Esophagus muscularis mucosa (tissue), 4 donors: ENCODE measurements at regions of chr14 and their contacts with region 1.

Region 1: DNA sequence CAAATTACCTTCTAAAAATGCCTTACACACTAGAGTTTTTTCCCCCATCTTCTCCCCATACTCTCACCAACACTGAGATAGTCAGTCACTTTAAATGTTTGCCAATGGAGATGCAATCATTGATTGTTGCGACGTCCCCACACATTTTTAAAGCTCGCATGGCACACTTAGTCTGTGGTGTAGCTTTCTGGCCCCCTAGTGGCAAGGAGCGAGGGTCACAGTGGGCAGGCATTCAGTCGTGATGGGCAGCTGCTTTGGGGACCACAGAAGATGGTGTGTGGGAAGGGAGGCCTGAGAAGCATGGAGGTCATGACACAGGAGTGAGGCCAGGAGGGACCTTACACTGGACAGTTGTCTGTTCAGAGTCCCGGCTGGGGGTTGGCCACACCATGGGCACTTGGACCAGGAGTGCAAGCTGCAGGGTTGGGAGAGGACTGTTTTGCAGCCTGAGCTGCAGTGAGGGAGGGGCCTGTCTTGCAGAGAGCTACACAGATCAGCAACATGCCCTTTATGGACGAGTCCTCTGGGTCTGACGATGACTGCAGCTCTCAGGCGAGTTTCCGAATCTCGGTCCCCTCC is 28.7 kb downstream of the PIGH start:
- DNase-seq: no peak
- H3K4me3 ChIP-seq: no peak overlapping the region
- H3K27ac ChIP-seq: no peak overlapping the region
- H3K4me1 ChIP-seq: no peaks in the 10 kb centered on the region
- H3K27me3 ChIP-seq: no peaks in the 10 kb centered on the region
- CTCF ChIP-seq: peak; percentile 72 to 82 (median 79)
- EP300 ChIP-seq: no peak
- POLR2A ChIP-seq: no peak

Region 2: DNA sequence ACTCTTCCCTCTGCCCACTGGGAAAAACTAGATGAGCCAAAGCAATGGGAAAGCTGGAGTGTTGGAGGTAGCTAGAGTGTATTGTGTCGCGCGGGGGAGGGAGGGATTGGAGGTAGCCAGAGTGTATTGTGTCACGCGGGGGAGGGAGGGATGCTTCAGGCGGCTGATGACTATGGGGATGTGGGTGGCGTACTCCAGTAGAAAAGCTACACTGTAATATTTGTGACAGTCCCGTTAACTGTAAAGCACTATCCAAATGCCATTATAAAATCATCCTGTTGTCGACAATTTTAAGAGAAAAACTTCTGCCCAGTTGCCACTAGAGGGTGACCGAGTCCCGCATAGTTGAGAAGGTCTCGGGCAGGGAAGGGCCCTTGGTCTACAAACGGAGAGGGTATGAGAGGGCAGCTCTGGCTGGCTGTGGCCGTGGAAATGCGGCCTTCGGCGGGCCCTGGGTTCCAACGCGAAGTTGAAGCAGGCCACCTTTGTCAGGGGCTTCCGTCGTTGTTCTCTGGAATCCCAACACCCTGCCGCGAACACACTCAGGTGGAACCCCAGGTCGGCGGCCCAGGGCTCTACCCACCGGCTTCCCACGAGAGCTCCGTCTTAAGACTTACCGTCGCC is 144.3 kb before region 1 on chr14:
- intact Hi-C with region 1: loop called (anchors 2 kb)
- DNase-seq: no peak
- H3K4me3 ChIP-seq: no peak overlapping the region
- H3K27ac ChIP-seq: no peak overlapping the region
- H3K4me1 ChIP-seq: peaks cover 0 to 13% (median 11%) of the 10 kb centered on the region in 4 donors
- H3K27me3 ChIP-seq: peaks cover 0 to 13% (median 2%) of the 10 kb centered on the region in 4 donors
- CTCF ChIP-seq: peak; percentile 67 to 84 (median 75)
- EP300 ChIP-seq: no peak
- POLR2A ChIP-seq: no peak

Region 3: DNA sequence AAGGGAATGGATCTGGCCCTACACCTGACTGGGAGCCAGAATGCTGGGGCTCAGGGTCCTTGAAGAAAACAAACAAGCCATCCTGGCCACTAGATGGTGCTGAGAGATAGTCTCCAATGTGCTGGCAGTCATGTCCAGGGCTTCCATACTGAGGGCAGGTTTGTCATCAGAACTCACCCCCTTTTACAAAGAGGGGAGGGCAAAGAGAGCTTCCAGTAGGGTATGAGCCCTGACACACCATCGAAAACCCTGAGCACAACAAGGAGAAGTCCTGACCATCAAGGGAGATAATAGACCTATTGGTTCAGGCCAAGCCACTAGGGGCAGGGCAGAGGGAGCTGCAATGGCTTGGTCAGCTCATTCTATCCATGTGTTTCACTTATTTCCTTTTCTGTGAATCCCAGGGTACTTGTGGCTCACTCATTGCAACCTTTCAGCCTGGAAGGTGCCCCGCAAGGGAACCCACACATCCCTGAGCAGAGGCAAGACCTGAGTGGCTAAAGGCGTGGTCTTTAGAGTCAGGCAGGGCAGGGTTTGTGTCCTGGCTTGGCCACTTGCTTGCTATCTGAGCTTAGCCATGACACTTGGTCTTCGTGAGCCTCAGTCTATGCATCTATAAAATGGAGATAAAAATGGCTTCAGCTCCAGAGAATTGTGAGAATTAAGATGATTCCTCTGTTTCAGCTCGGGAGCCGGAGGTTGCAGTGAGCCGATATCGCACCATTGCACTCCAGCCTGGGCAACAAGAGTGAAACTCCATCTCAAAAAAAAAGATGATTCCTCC is 44.5 kb before region 1 on chr14:
- intact Hi-C with region 1: loop called (anchors 5 kb)
- DNase-seq: no peak
- H3K4me3 ChIP-seq: no peak overlapping the region
- H3K27ac ChIP-seq: no peak overlapping the region
- H3K4me1 ChIP-seq: peaks cover 0 to 6% (median under 1%) of the 10 kb centered on the region in 4 donors
- H3K27me3 ChIP-seq: peaks cover 0 to 41% (median 3%) of the 10 kb centered on the region in 4 donors
- CTCF ChIP-seq: peak; percentile 50 to 60 (median 57)
- EP300 ChIP-seq: no peak
- POLR2A ChIP-seq: no peak

Region 4: GRCh38 chr14:67722293-67722692 is 150.9 kb after region 1 on chr14:
- intact Hi-C with region 1: no loop called
- DNase-seq: no peak
- H3K4me3 ChIP-seq: peak overlapping the region in 1 of 4 donors; percentile 24
- H3K27ac ChIP-seq: peak overlapping the region in 1 of 4 donors; percentile 34
- H3K4me1 ChIP-seq: peaks cover 11 to 12% (median 12%) of the 10 kb centered on the region in 4 donors
- H3K27me3 ChIP-seq: no peaks in the 10 kb centered on the region
- CTCF ChIP-seq: no peak
- EP300 ChIP-seq: no peak
- POLR2A ChIP-seq: no peak